ENCODE measurements at regions of chr6 and their contacts with region 1.

Region 1: DNA sequence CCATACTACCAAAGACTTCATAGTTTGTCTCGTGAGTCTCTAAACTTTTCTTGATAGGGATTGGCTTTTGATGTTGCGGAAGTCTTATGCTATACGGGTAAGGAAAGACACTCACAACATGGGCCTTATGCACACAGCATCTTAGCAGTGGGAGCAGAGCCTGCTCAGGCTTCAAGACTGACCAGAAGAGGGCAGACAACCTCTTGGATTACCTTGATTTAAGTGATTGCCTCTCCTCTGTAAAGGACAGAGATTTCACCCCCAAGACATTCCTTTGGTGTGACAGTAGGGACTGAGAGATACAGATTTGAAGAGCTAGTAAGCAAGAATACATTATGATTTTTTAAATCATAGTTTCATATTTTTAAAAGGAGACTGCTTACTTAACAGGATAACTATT is 71.0 kb upstream of the SAMD3 start:
- DNase-seq: peak; percentile 33
- H3K4me3 Mint-ChIP-seq: no peak overlapping the region
- H3K27ac Mint-ChIP-seq: no peak overlapping the region
- H3K4me1 Mint-ChIP-seq: no peaks in the 10 kb centered on the region
- H3K27me3 Mint-ChIP-seq: peaks cover 2% of the 10 kb centered on the region

Region 2: GRCh38 chr6:130843575-130844320 is 549.9 kb after region 1 on chr6:
- CTCF ChIA-PET with region 1: interaction called, 9 read pairs
- POLR2A ChIA-PET with region 1: no interaction called
- intact Hi-C with region 1: loop called (anchors 10 kb)
- DNase-seq: no peak
- H3K4me3 Mint-ChIP-seq: no peak overlapping the region
- H3K27ac Mint-ChIP-seq: no peak overlapping the region
- H3K4me1 Mint-ChIP-seq: peaks cover 2% of the 10 kb centered on the region
- H3K27me3 Mint-ChIP-seq: no peaks in the 10 kb centered on the region